ENCODE measurements at regions of chr5 and their contacts with region 1.

Region 1: DNA sequence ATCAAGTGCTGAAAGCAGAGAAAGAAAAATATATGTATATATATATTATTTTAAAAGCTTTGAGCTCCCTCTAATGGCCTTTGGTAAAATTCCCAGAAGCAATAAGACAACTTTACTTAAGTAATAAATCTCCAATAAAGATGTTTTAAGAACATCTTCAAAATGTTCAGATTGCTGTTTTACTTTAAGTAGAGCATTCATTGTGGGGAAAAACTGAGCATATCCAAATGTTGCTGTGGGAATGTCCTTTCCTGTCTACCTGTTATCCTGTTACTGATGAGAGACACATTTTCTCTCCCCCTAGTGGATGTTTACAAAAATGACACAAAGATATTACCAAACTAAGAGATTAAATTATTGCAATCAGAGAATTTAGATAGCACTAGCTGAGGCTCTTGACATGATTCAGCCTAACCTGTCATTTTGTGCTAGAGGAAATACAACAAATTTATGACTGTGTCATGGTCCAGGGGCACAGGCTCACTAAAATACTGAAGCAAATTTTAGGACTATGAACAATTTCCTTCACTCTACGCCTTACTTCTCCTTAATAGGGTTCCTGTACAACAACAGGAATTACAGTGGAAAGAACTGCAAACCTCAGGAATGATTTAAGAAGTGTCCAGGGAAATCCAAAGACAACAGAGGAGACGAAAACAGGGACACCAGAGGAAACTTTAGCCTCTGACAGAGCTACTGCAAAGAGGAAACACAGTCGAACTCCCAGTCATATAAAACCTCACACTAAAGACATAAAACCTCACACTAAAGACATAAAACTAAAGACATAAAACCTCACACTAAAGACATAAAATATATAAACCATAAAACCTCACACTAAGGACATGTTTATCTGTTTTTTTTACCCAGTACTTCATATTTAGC is 24.3 kb upstream of the PRRC1 start:
- DNase-seq: peak; percentile 53
- H3K4me3 ChIP-seq: no peak overlapping the region
- H3K27ac ChIP-seq: no peak overlapping the region
- H3K4me1 ChIP-seq: no peaks in the 10 kb centered on the region
- CTCF ChIP-seq: peak; percentile 100

Region 2: GRCh38 chr5:126348855-126349635 is 1144.1 kb before region 1 on chr5:
- CTCF ChIA-PET with region 1: no interaction called
- POLR2A ChIA-PET with region 1: no interaction called
- intact Hi-C with region 1: loop called (anchors 10 kb)
- DNase-seq: no peak
- H3K4me3 ChIP-seq: no peak overlapping the region
- H3K27ac ChIP-seq: no peak overlapping the region
- H3K4me1 ChIP-seq: no peaks in the 10 kb centered on the region
- CTCF ChIP-seq: no peak

Region 3: GRCh38 chr5:126656396-126657007 is 836.6 kb before region 1 on chr5:
- CTCF ChIA-PET with region 1: no interaction called
- POLR2A ChIA-PET with region 1: no interaction called
- intact Hi-C with region 1: loop called (anchors 1 kb)
- DNase-seq: peak; percentile 55
- H3K4me3 ChIP-seq: no peak overlapping the region
- H3K27ac ChIP-seq: no peak overlapping the region
- H3K4me1 ChIP-seq: peaks cover 6% of the 10 kb centered on the region
- CTCF ChIP-seq: peak; percentile 97

Region 4: GRCh38 chr5:127645300-127645726 is 152.2 kb after region 1 on chr5:
- CTCF ChIA-PET with region 1: no interaction called
- POLR2A ChIA-PET with region 1: no interaction called
- intact Hi-C with region 1: no loop called
- DNase-seq: no peak
- H3K4me3 ChIP-seq: no peak overlapping the region
- H3K27ac ChIP-seq: no peak overlapping the region
- H3K4me1 ChIP-seq: no peaks in the 10 kb centered on the region
- CTCF ChIP-seq: no peak

Measured in OCI-LY7 (cell line).